ENCODE measurements at regions of chr2 and their contacts with region 1.

Region 1: GRCh38 chr2:9178904-9179571 is 27.6 kb upstream of the ASAP2 start:
- DNase-seq: peak; percentile 54 to 89
- H3K4me3 ChIP-seq: peak overlapping the region; percentile 18; the same call in 1 of the 2 replicates
- H3K27ac ChIP-seq: peak overlapping the region; percentile 90
- H3K4me1 ChIP-seq: peaks cover 69% of the 10 kb centered on the region
- H3K27me3 ChIP-seq: no peaks in the 10 kb centered on the region
- CTCF ChIP-seq: no peak

Region 2: DNA sequence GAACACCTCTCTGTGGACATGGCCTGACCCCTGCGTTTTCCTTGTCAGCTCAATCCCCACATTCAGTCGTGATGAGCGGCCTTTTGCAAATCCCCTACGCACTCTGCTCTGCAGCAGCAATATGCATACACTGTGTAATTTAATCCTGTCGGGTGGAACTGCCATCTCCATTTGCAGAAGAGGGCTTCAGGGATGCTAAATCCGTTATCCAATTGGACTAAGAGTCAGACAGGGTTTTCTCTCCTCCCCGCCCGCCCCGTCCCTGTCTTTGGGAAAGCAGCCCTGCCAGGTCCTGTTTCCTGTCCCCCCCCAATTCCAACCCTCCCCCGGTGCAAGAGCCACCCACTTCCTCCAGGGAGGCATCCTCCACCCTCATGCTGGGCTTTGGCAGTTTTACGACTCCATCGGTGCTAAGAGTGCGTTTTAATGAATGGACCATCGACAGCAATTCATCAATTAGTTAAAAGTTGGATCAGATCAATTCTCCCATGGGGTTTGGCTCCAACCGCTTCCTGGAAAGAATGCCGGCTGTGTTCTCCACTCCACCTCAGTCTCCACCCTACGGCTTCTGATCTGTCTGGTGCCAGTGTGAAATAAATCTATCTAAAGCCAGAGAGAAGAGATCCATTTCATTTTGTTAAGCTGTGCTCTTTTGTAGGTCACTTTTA is 25.9 kb before region 1 on chr2:
- CTCF ChIA-PET with region 1: no interaction called
- POLR2A ChIA-PET with region 1: no interaction called
- intact Hi-C with region 1: loop called (anchors 2 kb)
- DNase-seq: peak; percentile 12 to 70
- H3K4me3 ChIP-seq: peak overlapping the region; percentile 32; the same call in 1 of the 2 replicates
- H3K27ac ChIP-seq: peak overlapping the region; percentile 89
- H3K4me1 ChIP-seq: peaks cover 25% of the 10 kb centered on the region
- H3K27me3 ChIP-seq: no peaks in the 10 kb centered on the region
- CTCF ChIP-seq: no peak

Measured in PC-9 (cell line).